Ascending aorta (tissue), 2 donors: ENCODE measurements at regions of chr12 and their contacts with region 1.

Region 1: GRCh38 chr12:25958428-25959070 is at the start of gene RASSF8:
- DNase-seq: no peak
- H3K4me3 ChIP-seq: peak within 1 kb of the TSS; percentile 79 to 92
- H3K27ac ChIP-seq: peak within 1 kb of the TSS; percentile 98 to 99
- H3K4me1 ChIP-seq: peaks cover 3 to 31% of the 10 kb centered on the region in 2 donors
- H3K27me3 ChIP-seq: no peaks in the 10 kb centered on the region
- CTCF ChIP-seq: no peak
- total RNA-seq, gene RASSF8: 92.1 TPM

Region 2: DNA sequence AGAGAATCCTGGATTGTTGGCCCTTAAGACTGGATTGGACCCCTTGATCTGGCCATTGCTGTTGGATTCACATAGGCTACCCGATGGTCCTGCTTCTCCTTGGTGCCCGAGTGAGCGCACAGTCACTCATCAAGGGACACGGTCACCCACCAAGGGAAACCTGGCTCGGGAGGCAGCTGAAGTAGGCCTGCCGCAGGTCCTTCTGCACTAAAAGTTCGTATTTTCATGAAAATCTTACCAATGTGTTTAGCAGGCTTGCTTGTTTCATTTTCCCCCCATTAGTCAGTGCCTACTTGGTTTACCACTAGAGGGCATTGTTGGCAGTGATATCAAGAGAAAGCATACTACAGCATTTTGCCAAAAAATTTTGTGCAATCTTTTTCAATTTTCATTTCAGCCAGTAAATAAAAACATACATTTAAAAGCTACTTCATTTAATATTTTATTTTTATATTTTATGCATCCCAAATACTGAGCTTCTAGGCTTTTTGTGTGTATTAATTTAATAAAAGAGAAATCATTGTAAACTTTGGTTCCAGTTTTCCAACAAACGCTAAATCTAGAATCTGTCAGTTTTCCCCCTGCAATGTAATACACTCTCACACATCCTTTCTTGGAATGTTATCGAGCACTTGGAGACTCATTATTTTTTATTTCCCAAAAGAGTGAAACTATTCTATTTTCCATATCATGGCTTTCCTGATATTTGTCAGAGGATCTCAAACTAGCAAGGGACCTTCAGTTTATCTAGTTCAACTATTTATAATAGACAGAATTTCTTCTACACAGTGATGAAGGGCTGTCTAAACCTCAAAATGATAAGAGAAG is 522.1 kb before region 1 on chr12:
- intact Hi-C with region 1: loop called (anchors 2 kb)
- DNase-seq: no peak
- H3K4me3 ChIP-seq: peak overlapping the region; percentile 47 to 54
- H3K27ac ChIP-seq: no peak overlapping the region
- H3K4me1 ChIP-seq: no peaks in the 10 kb centered on the region
- H3K27me3 ChIP-seq: no peaks in the 10 kb centered on the region
- CTCF ChIP-seq: peak; percentile 55 to 84 (median 74)

Region 3: DNA sequence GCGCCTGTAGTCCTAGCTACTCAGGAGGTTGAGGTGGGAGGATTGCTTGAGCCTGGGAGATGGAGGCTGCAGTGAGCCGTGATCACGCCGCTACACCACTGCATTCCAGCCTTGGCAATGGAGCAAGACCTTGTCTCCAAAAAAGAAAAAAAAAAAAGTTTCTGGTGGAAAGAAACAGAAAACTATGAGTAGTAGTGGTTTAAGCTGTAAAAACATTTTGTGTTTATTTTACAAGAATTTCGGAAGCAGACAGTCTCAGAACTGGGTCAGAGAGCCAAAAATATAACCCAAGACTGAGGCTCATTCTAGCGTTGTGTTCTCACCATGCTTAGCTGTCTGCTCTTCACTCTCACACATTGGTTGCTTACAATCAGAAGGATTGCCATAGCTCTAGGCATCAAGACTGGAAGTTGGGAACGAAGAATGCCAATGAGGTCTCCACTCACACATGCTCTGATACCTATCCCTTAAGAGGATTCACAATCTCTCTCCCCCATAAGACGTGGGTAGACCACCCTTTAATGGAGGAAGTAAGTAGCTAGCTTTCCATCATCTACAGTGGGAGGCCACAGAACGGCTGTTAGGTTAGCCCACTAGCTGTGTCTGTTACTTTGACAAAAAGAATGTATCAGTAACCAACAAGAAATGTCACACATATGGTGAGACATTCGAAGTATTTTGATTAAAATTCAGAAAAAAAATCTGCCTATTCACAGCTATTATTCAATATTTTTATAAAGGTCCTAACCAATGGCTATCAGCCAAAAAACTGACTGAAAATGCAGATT is 117.7 kb before region 1 on chr12:
- intact Hi-C with region 1: loop called (anchors 1 kb)
- DNase-seq: no peak
- H3K4me3 ChIP-seq: no peak overlapping the region
- H3K27ac ChIP-seq: peak overlapping the region in 1 of 2 donors; percentile 44
- H3K4me1 ChIP-seq: no peaks in the 10 kb centered on the region
- H3K27me3 ChIP-seq: no peaks in the 10 kb centered on the region
- CTCF ChIP-seq: no peak

Region 4: GRCh38 chr12:26011099-26011498 is 52.5 kb after region 1 on chr12:
- intact Hi-C with region 1: loop called (anchors 2 kb)
- DNase-seq: no peak
- H3K4me3 ChIP-seq: no peak overlapping the region
- H3K27ac ChIP-seq: peak overlapping the region; percentile 82 to 87
- H3K4me1 ChIP-seq: peaks cover 3 to 24% of the 10 kb centered on the region in 2 donors
- H3K27me3 ChIP-seq: no peaks in the 10 kb centered on the region
- CTCF ChIP-seq: no peak

Region 5: GRCh38 chr12:26113853-26114719 is 155.5 kb after region 1 on chr12:
- intact Hi-C with region 1: loop called (anchors 5 kb)
- DNase-seq: peak; percentile 81 to 97
- H3K4me3 ChIP-seq: peak overlapping the region; percentile 57
- H3K27ac ChIP-seq: peak overlapping the region; percentile 89 to 92
- H3K4me1 ChIP-seq: peaks cover 0 to 17% of the 10 kb centered on the region in 2 donors
- H3K27me3 ChIP-seq: no peaks in the 10 kb centered on the region
- CTCF ChIP-seq: peak; percentile 24 to 38 (median 26)